Mammary epithelial cell (primary cell): ENCODE measurements at regions of chr5 and their contacts with region 1.

Region 1: DNA sequence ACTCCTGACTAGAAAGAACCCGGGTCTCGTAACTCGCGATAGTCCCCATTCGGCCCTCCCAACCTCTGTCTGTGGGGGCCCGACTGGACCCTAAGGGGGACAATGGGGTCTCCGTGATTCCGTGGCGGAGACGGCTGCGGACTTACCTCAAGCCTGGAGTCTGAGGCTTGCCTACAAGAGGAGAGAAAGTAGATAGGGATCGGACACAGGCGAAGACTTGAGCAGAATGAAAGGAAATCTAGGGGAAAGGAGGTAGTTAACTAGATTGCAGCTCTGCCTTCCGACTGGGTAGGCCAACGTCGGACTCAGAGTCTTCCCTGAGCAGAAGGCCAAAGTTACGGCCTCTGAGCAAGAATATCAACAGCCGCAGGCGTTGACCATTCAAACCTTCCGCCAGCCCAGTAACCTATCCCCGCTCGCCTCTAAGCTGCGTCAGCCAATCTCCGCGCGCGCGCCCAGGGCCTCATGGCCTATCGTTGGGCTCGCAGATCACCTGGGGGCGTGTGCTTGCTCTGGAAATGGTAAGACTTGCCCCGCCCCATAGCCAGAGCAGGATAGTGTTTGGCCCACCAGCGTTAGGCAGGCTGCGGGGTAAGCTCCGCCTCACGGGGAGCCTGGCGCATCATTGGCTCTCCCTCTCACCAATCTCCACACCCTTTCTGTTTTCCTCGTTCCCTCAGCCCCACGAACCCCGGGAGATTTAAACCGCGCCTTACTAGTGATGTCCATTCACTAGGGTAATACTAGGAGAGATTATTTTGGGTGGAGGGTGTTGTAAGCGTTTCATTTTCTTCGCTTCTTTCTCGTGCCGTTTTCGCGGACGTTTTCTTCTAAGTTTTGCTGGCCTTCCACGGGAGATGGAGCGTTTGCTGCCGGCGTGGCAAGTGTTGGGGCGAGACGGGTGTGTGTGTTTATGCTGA is at the start of gene CDC25C:
- DNase-seq: peak; percentile 100
- H3K4me3 ChIP-seq: peak within 1 kb of the TSS; percentile 59 to 79 (median 62)
- H3K27ac ChIP-seq: peak within 1 kb of the TSS; percentile 59
- H3K4me1 ChIP-seq: peaks cover 5% of the 10 kb centered on the region
- H3K27me3 ChIP-seq: no peaks in the 10 kb centered on the region
- CTCF ChIP-seq: no peak
- total RNA-seq, gene CDC25C: 0.67 to 5.8 TPM

Region 2: GRCh38 chr5:137800700-137801411 is 530.9 kb before region 1 on chr5:
- CTCF ChIA-PET with region 1: no interaction called
- dilution Hi-C with region 1: no loop called
- in situ Hi-C with region 1: no loop called
- intact Hi-C with region 1: no loop called
- DNase-seq: no peak
- H3K4me3 ChIP-seq: no peak overlapping the region
- H3K27ac ChIP-seq: no peak overlapping the region
- H3K4me1 ChIP-seq: no peaks in the 10 kb centered on the region
- H3K27me3 ChIP-seq: peaks cover 1% of the 10 kb centered on the region
- CTCF ChIP-seq: no peak

Region 3: GRCh38 chr5:138018844-138019243 is 312.9 kb before region 1 on chr5:
- CTCF ChIA-PET with region 1: no interaction called
- dilution Hi-C with region 1: no loop called
- in situ Hi-C with region 1: no loop called
- intact Hi-C with region 1: no loop called
- DNase-seq: no peak
- H3K4me3 ChIP-seq: no peak overlapping the region
- H3K27ac ChIP-seq: no peak overlapping the region
- H3K4me1 ChIP-seq: peaks cover 17% of the 10 kb centered on the region
- H3K27me3 ChIP-seq: no peaks in the 10 kb centered on the region
- CTCF ChIP-seq: no peak

Region 4: DNA sequence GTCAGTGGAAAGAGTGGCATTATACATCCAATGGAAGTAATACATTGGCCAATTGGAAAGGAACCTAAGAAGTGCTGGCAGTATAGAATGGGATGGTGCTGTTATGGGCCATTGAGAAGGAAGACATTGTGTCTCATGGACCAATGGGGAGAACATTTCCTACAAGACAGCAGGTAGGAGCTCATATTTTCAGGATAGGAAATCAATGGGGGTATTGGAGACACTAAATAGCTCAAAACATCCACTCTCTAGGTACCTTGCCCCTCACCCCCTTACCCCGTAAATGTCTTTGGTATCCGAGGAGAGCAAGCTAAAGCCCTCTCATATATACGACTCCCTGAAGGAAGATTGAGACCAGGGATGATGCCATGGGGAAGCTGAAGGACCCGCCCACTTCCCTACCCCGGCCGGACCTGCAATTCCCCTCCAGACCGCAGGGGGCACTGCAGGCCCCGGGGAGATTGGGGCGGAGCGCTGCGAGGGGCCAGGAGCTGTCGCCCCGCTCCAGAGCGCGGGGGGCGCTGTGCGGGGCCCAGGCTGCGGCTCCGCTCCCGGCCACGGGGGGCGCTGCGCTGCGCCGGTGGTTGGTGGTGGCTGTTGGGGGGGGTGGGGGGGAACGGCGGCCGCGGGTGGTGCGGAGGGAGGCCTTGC is 20.5 kb after region 1 on chr5 and contains the start of gene KDM3B:
- CTCF ChIA-PET with region 1: interaction called, 11 read pairs
- dilution Hi-C with region 1: no loop called
- in situ Hi-C with region 1: no loop called
- intact Hi-C with region 1: no loop called
- DNase-seq: peak; percentile 81
- H3K4me3 ChIP-seq: peak within 1 kb of the TSS; percentile 77 to 83 (median 82)
- H3K27ac ChIP-seq: peak within 1 kb of the TSS; percentile 65
- H3K4me1 ChIP-seq: peaks cover 18% of the 10 kb centered on the region
- H3K27me3 ChIP-seq: no peaks in the 10 kb centered on the region
- CTCF ChIP-seq: peak; percentile 98
- total RNA-seq, gene KDM3B: 35.6 to 42.7 TPM

Region 5: GRCh38 chr5:139808493-139809139 is 1476.9 kb after region 1 on chr5:
- CTCF ChIA-PET with region 1: no interaction called
- dilution Hi-C with region 1: no loop called
- in situ Hi-C with region 1: no loop called
- intact Hi-C with region 1: no loop called
- DNase-seq: no peak
- H3K4me3 ChIP-seq: no peak overlapping the region
- H3K27ac ChIP-seq: no peak overlapping the region
- H3K4me1 ChIP-seq: no peaks in the 10 kb centered on the region
- H3K27me3 ChIP-seq: peaks cover 2% of the 10 kb centered on the region
- CTCF ChIP-seq: no peak